CD4-positive, alpha-beta T cell (primary cell): ENCODE measurements at regions of chr17 and their contacts with region 1.

Region 1: GRCh38 chr17:63611354-63611753 is 10.7 kb downstream of the TACO1 start:
- DNase-seq: peak in 5 of 14 experiments; percentile 5 to 62 (median 29)
- ATAC-seq: peak; percentile 27
- H3K4me3 ChIP-seq: no peak overlapping the region
- H3K4me3 Mint-ChIP-seq: peak overlapping the region; percentile 42
- H3K27ac ChIP-seq: peak overlapping the region in 1 of 2 donors; percentile 70
- H3K27ac Mint-ChIP-seq: peak overlapping the region; percentile 88
- H3K4me1 ChIP-seq: peaks cover 30% of the 10 kb centered on the region
- H3K4me1 Mint-ChIP-seq: peaks cover 31% of the 10 kb centered on the region
- H3K27me3 ChIP-seq: no peaks in the 10 kb centered on the region
- H3K27me3 Mint-ChIP-seq: no peaks in the 10 kb centered on the region
- CTCF ChIP-seq: no peak

Region 2: DNA sequence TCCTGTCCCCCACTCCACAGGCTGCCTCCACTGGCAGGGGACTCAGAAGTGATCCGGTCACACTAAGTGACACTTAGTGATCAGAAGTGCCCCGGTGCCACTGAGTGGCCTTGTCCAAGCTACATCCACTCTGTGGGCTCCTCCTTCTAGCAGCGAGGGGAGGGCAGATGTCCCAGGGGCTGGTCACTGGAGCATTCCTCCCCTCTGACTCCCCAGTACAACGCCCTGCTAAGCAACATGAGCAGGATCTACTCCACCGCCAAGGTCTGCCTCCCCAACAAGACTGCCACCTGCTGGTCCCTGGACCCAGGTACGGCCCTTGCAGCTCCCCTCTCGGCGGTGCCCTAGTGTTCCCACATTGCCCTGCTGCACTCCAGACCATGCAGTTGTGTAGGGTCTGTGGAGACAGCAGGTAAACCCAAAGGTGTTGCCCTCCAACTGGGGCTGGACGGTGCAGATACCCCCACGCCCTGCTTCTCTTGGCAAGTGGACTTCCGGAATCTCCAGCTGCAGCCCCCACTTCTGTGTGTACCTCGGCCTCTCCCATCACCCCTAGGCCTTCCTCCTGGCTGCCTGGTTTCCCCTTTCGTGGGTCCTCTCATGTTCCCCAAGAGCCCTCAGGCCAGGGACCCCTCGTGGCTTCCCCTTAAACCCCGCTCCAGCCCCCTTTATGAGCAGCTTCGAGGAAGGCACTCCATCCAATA is 132.4 kb before region 1 on chr17:
- CTCF ChIA-PET with region 1: interaction called, 15 read pairs
- POLR2A ChIA-PET with region 1: interaction called, 4 read pairs
- intact Hi-C with region 1: loop called (anchors 2 to 5 kb)
- DNase-seq: peak; percentile 66 to 88 (median 70)
- ATAC-seq: peak; percentile 81
- H3K4me3 ChIP-seq: no peak overlapping the region
- H3K4me3 Mint-ChIP-seq: peak overlapping the region; percentile 64
- H3K27ac ChIP-seq: no peak overlapping the region
- H3K27ac Mint-ChIP-seq: no peak overlapping the region
- H3K4me1 ChIP-seq: peaks cover 26% of the 10 kb centered on the region
- H3K4me1 Mint-ChIP-seq: peaks cover 14% of the 10 kb centered on the region
- H3K27me3 ChIP-seq: peaks cover 10 to 11% of the 10 kb centered on the region in 2 experiments
- H3K27me3 Mint-ChIP-seq: peaks cover 35% of the 10 kb centered on the region
- CTCF ChIP-seq: peak; percentile 61

Region 3: GRCh38 chr17:63549946-63550807 is 61.2 kb before region 1 on chr17 and contains the start of gene DCAF7:
- CTCF ChIA-PET with region 1: interaction called, 4 read pairs
- POLR2A ChIA-PET with region 1: interaction called, 5 read pairs
- intact Hi-C with region 1: loop called in 1 of 2 experiments (anchors 2 kb)
- DNase-seq: peak; percentile 97 to 100 (median 99)
- ATAC-seq: peak; percentile 95
- H3K4me3 ChIP-seq: peak within 1 kb of the TSS; percentile 89
- H3K4me3 Mint-ChIP-seq: peak within 1 kb of the TSS; percentile 98
- H3K27ac ChIP-seq: peak within 1 kb of the TSS; percentile 90 to 91
- H3K27ac Mint-ChIP-seq: peak within 1 kb of the TSS; percentile 88
- H3K4me1 ChIP-seq: peaks cover 38% of the 10 kb centered on the region
- H3K4me1 Mint-ChIP-seq: peaks cover 52% of the 10 kb centered on the region
- H3K27me3 ChIP-seq: no peaks in the 10 kb centered on the region
- H3K27me3 Mint-ChIP-seq: no peaks in the 10 kb centered on the region
- CTCF ChIP-seq: no peak
- total RNA-seq, gene DCAF7: 11.3 to 11.9 TPM

Region 4: DNA sequence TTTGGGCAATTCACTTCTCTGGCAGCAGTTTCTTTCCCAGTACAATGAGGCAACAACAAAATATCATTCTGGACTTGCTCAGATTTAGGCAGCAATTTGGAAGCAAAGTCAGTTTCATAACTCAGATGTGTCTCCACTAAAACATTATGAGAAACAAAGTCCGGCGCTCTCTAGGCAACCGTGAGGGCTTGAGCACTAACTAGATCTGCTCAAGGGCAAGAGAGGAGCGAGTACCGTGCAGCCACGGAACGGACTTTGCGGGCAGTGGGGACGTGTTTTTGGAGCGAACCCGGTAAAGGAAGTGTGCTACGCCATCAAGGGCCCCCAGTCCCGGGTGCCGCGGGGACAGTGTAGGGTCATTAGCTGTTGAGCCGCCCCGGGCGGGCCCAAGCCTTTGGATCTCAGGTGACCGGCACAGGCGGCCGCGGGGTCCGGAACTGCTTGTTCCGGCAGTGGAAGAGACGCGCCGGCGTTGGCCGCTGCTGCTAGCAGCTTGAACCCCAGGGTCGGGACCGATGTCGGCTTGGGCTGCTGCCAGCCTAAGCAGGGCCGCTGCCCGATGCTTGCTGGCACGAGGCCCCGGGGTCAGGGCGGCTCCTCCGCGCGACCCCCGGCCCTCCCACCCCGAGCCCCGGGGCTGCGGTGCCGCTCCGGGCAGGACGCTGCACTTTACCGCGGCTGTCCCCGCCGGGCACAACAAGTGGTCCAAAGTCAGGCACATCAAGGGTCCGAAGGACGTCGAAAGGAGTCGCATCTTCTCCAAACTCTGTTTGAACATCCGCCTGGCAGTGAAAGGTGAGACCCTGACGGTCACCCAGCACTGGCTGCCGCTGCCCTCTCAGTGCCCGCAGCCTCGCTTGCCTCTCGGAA is 10.6 kb before region 1 on chr17 and contains the start of gene TACO1:
- CTCF ChIA-PET with region 1: interaction called, 16 read pairs
- POLR2A ChIA-PET with region 1: interaction called, 19 read pairs
- intact Hi-C with region 1: no loop called
- DNase-seq: peak; percentile 57 to 86 (median 73)
- ATAC-seq: peak; percentile 84
- H3K4me3 ChIP-seq: peak within 1 kb of the TSS; percentile 94
- H3K4me3 Mint-ChIP-seq: peak within 1 kb of the TSS; percentile 90
- H3K27ac ChIP-seq: peak within 1 kb of the TSS; percentile 60 to 69
- H3K27ac Mint-ChIP-seq: peak within 1 kb of the TSS; percentile 87
- H3K4me1 ChIP-seq: peaks cover 45% of the 10 kb centered on the region
- H3K4me1 Mint-ChIP-seq: peaks cover 40% of the 10 kb centered on the region
- H3K27me3 ChIP-seq: no peaks in the 10 kb centered on the region
- H3K27me3 Mint-ChIP-seq: no peaks in the 10 kb centered on the region
- CTCF ChIP-seq: no peak
- total RNA-seq, gene TACO1: 11.3 to 13.2 TPM

Region 5: DNA sequence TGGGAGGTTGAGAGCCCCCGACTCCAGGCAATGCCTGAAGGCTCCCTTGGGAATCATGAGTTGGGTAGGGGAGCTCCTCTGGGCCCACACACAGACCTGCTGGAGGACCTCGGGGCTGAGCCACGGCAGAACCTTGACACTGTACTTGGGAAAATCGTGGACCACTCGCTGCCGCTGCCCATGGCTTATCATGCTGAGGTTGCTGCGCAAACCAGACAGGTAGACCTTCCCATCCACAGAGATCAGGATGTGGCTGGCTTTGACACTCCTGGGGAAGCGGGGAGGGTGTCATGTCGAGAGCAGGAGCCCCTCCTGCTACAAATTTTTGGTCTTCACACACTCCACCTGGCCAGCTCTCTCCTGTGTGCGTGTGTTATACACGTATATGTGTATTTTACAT is 95.8 kb after region 1 on chr17:
- CTCF ChIA-PET with region 1: interaction called, 9 read pairs
- POLR2A ChIA-PET with region 1: interaction called, 11 read pairs
- intact Hi-C with region 1: no loop called
- DNase-seq: peak in 6 of 14 experiments; percentile 28 to 79 (median 54)
- ATAC-seq: peak; percentile 57
- H3K4me3 ChIP-seq: peak overlapping the region; percentile 39
- H3K4me3 Mint-ChIP-seq: peak overlapping the region; percentile 75
- H3K27ac ChIP-seq: peak overlapping the region; percentile 69 to 70
- H3K27ac Mint-ChIP-seq: peak overlapping the region; percentile 100
- H3K4me1 ChIP-seq: peaks cover 86% of the 10 kb centered on the region
- H3K4me1 Mint-ChIP-seq: peaks cover 83% of the 10 kb centered on the region
- H3K27me3 ChIP-seq: no peaks in the 10 kb centered on the region
- H3K27me3 Mint-ChIP-seq: no peaks in the 10 kb centered on the region
- CTCF ChIP-seq: no peak